ENCODE measurements at regions of chr2 and their contacts with region 1.

Region 1: DNA sequence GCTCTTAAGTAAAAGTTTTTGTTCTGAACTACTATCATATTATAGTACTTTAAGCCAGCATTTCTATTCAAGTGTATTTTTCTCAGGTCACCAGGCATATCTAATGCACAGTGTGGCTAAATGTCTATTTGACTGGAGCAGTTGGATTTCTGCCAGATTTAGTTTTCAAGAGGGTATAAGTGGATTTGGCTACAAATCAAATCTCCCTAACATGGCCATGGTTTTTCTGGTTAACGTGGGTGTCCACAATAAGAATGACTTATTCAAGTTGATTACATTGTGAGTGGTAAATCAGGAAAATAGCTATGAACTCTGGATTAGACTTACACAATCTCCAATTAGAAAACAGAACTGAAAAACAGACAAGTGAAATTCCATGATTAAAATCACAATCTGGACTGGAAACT is 5.7 kb upstream of the CHN1 start:
- DNase-seq: no peak
- H3K4me3 Mint-ChIP-seq: no peak overlapping the region
- H3K27ac Mint-ChIP-seq: no peak overlapping the region
- H3K4me1 Mint-ChIP-seq: peaks cover 3% of the 10 kb centered on the region
- H3K27me3 Mint-ChIP-seq: peaks cover 22% of the 10 kb centered on the region

Region 2: GRCh38 chr2:175778161-175778560 is 767.3 kb after region 1 on chr2:
- CTCF ChIA-PET with region 1: no interaction called
- intact Hi-C with region 1: loop called (anchors 10 kb)
- DNase-seq: no peak
- H3K4me3 Mint-ChIP-seq: no peak overlapping the region
- H3K27ac Mint-ChIP-seq: no peak overlapping the region
- H3K4me1 Mint-ChIP-seq: no peaks in the 10 kb centered on the region
- H3K27me3 Mint-ChIP-seq: peaks cover 6% of the 10 kb centered on the region